GM12878 (cell line): ENCODE measurements at regions of chr1 and their contacts with region 1.

Region 1: DNA sequence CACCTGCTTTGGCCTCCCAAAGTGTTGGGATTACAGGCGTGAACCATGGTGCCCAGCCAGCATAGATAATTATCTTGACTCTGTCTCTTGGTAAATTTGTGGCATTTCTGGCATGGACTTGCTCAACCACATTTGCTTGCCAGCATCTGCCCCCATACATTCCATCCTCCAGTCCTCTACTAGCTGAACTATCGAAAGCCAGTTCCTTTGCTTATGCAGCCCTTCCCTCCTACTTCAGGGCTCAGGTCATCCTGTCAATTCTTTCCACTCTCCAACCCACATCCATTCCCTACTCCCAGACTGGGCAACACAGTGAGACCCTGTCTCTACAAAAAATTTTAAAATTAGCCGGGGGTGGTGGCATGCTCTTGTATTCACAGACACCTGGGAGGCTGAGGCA is 13.0 kb upstream of the UQCRHL start:
- DNase-seq: no peak
- ATAC-seq: no peak
- H3K4me3 ChIP-seq: no peak overlapping the region
- H3K27ac ChIP-seq: no peak overlapping the region
- H3K4me1 ChIP-seq: no peaks in the 10 kb centered on the region
- H3K27me3 ChIP-seq: no peaks in the 10 kb centered on the region
- CTCF ChIP-seq: no peak
- EP300 ChIP-seq: no peak
- POLR2A ChIP-seq: no peak
- RAD21 ChIP-seq: no peak

Region 2: DNA sequence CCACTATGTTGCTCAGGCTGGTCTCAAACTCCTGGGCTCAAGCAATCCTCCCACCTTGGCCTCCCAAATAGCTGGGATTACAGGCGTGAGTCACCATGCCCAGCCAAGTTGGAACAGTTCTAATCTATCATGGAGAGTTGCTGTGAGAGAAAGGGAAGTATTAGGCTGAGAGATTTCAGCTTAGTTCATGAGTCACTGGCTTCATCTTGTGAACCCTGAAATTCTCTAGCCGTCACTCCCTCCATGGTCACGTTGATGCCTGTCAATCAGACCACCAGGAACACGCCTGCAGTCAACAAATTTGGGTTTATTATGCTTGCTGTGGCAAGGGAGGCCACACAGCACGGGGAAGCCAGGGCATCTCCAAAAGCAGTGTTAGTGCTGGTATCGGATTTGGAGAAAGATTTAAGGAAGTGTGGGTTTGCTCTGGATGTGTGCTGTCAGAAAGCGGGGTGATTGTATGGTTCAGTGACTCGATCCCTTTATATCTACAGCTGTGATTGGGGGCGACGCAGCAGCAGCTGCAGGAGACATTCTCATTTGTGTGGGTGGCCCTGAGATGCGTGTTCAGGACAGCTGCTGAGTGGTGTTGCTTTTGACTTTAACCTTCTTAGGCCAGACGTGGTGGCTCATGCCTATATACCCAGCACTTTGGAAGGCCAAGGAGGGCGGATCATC is 31.7 kb before region 1 on chr1:
- CTCF ChIA-PET with region 1: interaction called, 31 read pairs
- POLR2A ChIA-PET with region 1: no interaction called
- RAD21 ChIA-PET with region 1: interaction called, 11 read pairs
- SMC1A ChIA-PET with region 1: interaction called, 9 read pairs
- in situ Hi-C with region 1: no loop called
- intact Hi-C with region 1: no loop called
- DNase-seq: no peak
- ATAC-seq: peak; percentile 34; the same call in 2 of the 3 replicates
- H3K4me3 ChIP-seq: no peak overlapping the region
- H3K27ac ChIP-seq: no peak overlapping the region
- H3K4me1 ChIP-seq: peaks cover 5% of the 10 kb centered on the region
- H3K27me3 ChIP-seq: no peaks in the 10 kb centered on the region; a peak in 1 of 4 replicates
- CTCF ChIP-seq: no peak
- EP300 ChIP-seq: no peak
- POLR2A ChIP-seq: no peak
- RAD21 ChIP-seq: no peak

Region 3: GRCh38 chr1:15835741-15836510 is 15.4 kb after region 1 on chr1:
- CTCF ChIA-PET with region 1: interaction called, 25 read pairs
- POLR2A ChIA-PET with region 1: interaction called, 12 read pairs
- RAD21 ChIA-PET with region 1: interaction called, 35 read pairs
- SMC1A ChIA-PET with region 1: interaction called, 49 read pairs
- in situ Hi-C with region 1: no loop called
- intact Hi-C with region 1: no loop called
- DNase-seq: peak; percentile 96
- ATAC-seq: peak; percentile 64
- H3K4me3 ChIP-seq: peak overlapping the region; percentile 87
- H3K27ac ChIP-seq: peak overlapping the region; percentile 100
- H3K4me1 ChIP-seq: peaks cover 25% of the 10 kb centered on the region
- H3K27me3 ChIP-seq: no peaks in the 10 kb centered on the region
- CTCF ChIP-seq: no peak
- EP300 ChIP-seq: no peak
- POLR2A ChIP-seq: peak; percentile 87
- RAD21 ChIP-seq: no peak

Region 4: DNA sequence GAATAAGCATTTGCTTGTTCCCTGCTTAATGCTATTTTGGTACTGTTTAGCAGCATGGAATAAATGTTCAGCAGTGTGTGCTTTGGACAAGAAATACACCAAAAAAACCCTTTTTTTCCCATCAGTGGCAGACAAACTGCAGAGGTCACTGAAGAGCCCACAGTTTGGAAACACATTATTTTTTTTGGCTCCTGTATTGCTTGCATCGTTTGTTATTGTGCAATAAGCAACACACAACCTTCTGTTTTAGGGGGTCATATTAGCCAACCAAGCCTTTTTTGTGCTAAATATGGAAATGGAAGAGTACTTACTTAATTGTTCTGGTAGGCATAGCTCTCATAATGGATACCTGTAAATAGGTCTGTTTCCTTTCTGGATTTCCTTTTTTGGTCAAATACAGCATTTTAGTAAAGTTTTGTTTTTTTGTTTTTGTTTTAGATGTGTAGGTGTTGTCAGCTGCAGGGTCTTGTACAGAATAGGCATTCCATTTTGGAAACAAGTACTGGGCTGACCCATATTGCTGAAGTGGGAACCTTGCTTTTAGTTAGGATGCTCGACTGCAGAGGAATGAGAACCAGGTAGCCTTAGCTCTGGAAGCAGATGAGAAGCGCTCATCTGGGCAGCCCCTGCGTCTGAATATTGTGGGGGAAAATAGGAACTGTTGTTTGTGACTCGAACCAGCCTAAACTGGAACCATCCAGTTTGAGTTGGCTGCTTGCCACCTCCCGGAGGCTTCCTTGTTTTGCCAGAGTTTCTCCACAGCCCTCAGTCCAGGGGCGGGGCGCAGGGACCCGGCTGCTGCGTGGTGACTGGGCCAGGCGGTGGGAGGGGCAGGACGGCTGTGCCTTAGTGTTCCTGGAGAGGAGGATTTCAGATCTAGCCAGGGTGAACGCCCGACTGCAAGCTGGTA is 65.5 kb after region 1 on chr1:
- CTCF ChIA-PET with region 1: interaction called, 15 read pairs
- POLR2A ChIA-PET with region 1: interaction called, 4 read pairs
- RAD21 ChIA-PET with region 1: interaction called, 4 read pairs
- SMC1A ChIA-PET with region 1: interaction called, 11 read pairs
- in situ Hi-C with region 1: no loop called
- intact Hi-C with region 1: loop called (anchors 5 kb)
- DNase-seq: peak; percentile 36
- ATAC-seq: peak; percentile 65
- H3K4me3 ChIP-seq: peak overlapping the region; percentile 46; the same call in 1 of the 2 replicates
- H3K27ac ChIP-seq: peak overlapping the region; percentile 87
- H3K4me1 ChIP-seq: peaks cover 24% of the 10 kb centered on the region
- H3K27me3 ChIP-seq: no peaks in the 10 kb centered on the region
- CTCF ChIP-seq: no peak
- EP300 ChIP-seq: no peak
- POLR2A ChIP-seq: peak; percentile 37; the same call in 1 of the 2 replicates
- RAD21 ChIP-seq: no peak

Region 5: DNA sequence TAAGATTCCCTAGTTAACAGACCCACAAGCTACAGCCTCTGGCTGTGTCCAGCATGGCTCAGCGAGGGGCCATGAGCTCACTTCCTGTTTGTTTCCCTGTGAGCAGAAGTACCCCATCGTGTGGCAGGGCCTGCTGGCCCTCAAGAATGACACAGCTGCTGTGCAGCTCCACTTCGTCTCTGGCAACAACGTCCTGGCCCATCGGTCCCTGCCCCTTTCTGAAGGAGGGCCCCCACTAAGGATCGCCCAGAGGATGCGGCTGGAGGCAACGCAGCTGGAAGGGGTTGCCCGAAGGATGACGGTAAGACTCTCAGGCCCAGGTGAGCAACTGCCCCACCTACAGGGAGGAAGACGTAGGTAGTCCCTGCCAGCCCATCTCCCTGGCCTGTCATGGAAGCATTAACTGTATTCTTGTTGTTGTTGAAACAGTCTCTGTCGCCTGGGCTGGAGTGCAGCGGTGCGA is 117.3 kb after region 1 on chr1:
- CTCF ChIA-PET with region 1: interaction called, 19 read pairs
- POLR2A ChIA-PET with region 1: interaction called, 4 read pairs
- RAD21 ChIA-PET with region 1: interaction called, 3 read pairs
- SMC1A ChIA-PET with region 1: interaction called, 9 read pairs
- in situ Hi-C with region 1: no loop called
- intact Hi-C with region 1: no loop called
- DNase-seq: no peak
- ATAC-seq: peak; percentile 15
- H3K4me3 ChIP-seq: no peak overlapping the region
- H3K27ac ChIP-seq: no peak overlapping the region
- H3K4me1 ChIP-seq: no peaks in the 10 kb centered on the region
- H3K27me3 ChIP-seq: no peaks in the 10 kb centered on the region
- CTCF ChIP-seq: 0 out of 6 replicates have a peak, but pooled peaks of 2 of the 3 experiments have one; percentile 1 to 11
- EP300 ChIP-seq: no peak
- POLR2A ChIP-seq: peak; percentile 57
- RAD21 ChIP-seq: no peak; the same call in 1 of the 2 replicates

Region 6: GRCh38 chr1:15975805-15976680 is 155.6 kb after region 1 on chr1 and contains the start of gene ZBTB17:
- CTCF ChIA-PET with region 1: interaction called, 17 read pairs
- POLR2A ChIA-PET with region 1: interaction called, 11 read pairs
- RAD21 ChIA-PET with region 1: interaction called, 17 read pairs
- SMC1A ChIA-PET with region 1: interaction called, 12 read pairs
- in situ Hi-C with region 1: no loop called
- intact Hi-C with region 1: no loop called
- DNase-seq: peak; percentile 79
- ATAC-seq: peak; percentile 82
- H3K4me3 ChIP-seq: peak within 1 kb of the TSS; percentile 95
- H3K27ac ChIP-seq: peak within 1 kb of the TSS; percentile 80
- H3K4me1 ChIP-seq: peaks cover 4% of the 10 kb centered on the region
- H3K27me3 ChIP-seq: no peaks in the 10 kb centered on the region
- CTCF ChIP-seq: no peak
- EP300 ChIP-seq: no peak
- POLR2A ChIP-seq: peak; percentile 78
- RAD21 ChIP-seq: no peak
- polyA plus RNA-seq, gene ZBTB17: 0.87 to 4.3 TPM

Region 7: DNA sequence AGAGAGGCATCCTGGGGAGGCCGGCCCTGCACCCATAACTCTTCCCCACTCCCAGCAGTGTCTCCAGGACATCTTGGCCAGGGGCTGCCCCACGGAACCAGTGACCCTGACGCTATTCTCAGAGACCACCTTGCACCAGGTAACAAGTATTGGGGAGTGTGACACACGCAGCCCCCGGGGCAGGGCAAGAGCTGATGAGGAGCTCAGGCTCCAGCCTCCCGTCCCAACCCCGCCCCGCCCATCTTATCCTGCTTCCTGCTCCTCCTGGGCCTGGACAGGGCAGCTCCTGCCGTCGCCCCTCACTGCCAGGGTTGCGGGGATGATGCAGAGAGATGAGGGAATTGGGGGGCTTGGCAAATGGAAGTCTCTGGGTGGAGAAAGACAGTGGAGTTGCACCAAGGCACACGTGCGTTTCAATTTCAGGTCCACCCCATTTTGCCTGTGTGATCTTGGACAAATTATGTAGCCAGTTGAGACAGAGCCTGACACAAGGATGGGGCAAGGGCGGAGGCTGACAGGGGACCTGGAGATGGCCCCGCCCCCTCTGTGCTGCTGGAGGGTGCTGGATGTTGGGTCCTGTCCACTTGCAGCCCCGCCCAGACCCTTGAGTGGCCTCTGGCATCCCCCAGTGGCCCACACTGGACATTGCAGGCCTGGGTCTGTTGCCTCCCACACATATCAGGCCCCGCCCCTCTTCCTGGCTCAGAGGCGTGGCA is 212.1 kb after region 1 on chr1:
- CTCF ChIA-PET with region 1: interaction called, 12 read pairs
- POLR2A ChIA-PET with region 1: no interaction called
- RAD21 ChIA-PET with region 1: no interaction called
- SMC1A ChIA-PET with region 1: no interaction called
- in situ Hi-C with region 1: no loop called
- intact Hi-C with region 1: no loop called
- DNase-seq: no peak
- ATAC-seq: peak; percentile 97
- H3K4me3 ChIP-seq: no peak overlapping the region
- H3K27ac ChIP-seq: no peak overlapping the region
- H3K4me1 ChIP-seq: no peaks in the 10 kb centered on the region
- H3K27me3 ChIP-seq: no peaks in the 10 kb centered on the region
- CTCF ChIP-seq: peak; percentile 83 to 98 (median 83)
- EP300 ChIP-seq: no peak
- POLR2A ChIP-seq: no peak
- RAD21 ChIP-seq: peak; percentile 92